Activated CD8-positive, alpha-beta T cell treated with anti-CD3 and anti-CD28 coated beads for 36 hours (primary cell): ENCODE measurements at regions of chr10 and their contacts with region 1.

Region 1: DNA sequence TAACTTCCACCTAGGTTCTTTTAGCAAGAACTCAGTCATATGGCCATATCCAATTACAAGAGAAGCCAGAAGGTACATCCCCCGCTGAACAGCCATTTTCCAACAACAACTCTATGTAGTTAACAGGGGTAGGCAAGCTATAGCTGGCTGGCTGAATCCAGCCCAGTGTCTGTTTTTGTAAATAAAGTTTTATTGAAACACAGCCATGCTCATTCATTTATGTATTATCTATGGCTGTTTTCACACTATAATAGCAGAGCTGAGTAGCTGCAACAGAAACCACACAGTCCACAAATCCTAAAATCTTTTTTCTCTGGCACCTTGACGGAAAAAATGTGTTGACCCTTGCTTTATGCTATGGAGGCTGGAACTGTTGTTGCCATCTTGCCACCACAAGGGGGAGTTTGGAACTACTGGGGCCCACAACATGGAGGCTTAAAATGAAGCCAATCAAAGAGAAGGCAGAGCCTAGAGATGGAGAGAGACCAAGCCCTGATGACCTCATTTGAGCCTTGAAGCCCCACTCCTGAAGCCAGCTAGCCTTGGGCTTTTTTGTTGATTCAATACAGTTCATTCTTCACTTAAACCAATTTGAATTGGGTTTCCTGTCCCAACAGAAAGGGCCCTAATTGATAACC is 33.3 kb upstream of the XPNPEP1 start:
- DNase-seq: peak; percentile 50
- ATAC-seq: peak; percentile 97
- H3K4me3 Mint-ChIP-seq: no peak overlapping the region
- H3K27ac Mint-ChIP-seq: no peak overlapping the region
- H3K4me1 Mint-ChIP-seq: peaks cover 10% of the 10 kb centered on the region
- H3K27me3 Mint-ChIP-seq: no peaks in the 10 kb centered on the region
- CTCF ChIP-seq: peak; percentile 74

Region 2: DNA sequence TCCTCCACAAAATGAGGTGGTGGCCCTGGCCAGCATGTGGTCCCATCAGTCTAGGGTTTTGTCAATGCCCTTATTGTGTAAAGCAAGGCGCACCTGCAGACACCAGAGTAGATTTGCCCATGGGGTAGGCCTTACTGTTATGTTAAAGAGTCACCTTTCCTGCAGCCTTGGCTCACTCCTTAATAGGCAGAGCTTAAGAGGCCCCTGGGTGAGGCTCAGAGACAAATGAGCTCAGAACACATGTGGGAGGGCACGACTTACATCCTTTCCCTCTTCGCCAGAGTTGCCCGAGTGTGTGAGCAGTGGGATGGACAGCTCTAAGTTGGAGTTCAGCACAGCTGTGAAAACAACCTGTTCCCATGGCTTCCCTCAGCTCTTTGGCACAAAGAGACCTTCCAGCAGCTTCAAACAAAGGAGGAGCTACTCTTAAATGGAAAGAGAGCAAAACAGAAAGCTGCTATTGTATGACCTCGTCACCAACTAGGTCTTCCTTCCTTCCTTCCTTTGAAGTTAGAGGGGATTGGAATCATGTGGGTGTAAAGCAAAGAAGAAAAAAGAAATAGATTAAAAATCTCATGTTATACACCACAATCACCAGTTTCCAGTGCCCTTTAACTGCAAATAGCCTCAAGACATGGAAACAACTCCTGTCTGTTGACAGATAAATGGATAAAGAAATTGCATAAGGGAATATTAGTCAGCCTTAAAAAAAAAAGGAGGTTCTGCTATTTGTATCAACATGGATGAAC is 21.4 kb before region 1 on chr10:
- CTCF ChIA-PET with region 1: interaction called, 17 read pairs
- POLR2A ChIA-PET with region 1: interaction called, 3 read pairs
- intact Hi-C with region 1: no loop called
- DNase-seq: peak; percentile 44
- ATAC-seq: peak; percentile 68
- H3K4me3 Mint-ChIP-seq: peak overlapping the region; percentile 78
- H3K27ac Mint-ChIP-seq: peak overlapping the region; percentile 98
- H3K4me1 Mint-ChIP-seq: peaks cover 62% of the 10 kb centered on the region
- H3K27me3 Mint-ChIP-seq: no peaks in the 10 kb centered on the region
- CTCF ChIP-seq: no peak

Region 3: GRCh38 chr10:109966961-109967738 is 10.6 kb after region 1 on chr10:
- CTCF ChIA-PET with region 1: interaction called, 12 read pairs
- POLR2A ChIA-PET with region 1: interaction called, 5 read pairs
- intact Hi-C with region 1: no loop called
- DNase-seq: no peak
- ATAC-seq: no peak
- H3K4me3 Mint-ChIP-seq: no peak overlapping the region
- H3K27ac Mint-ChIP-seq: no peak overlapping the region
- H3K4me1 Mint-ChIP-seq: peaks cover 3% of the 10 kb centered on the region
- H3K27me3 Mint-ChIP-seq: peaks cover 2% of the 10 kb centered on the region
- CTCF ChIP-seq: no peak